PC-3 (cell line): ENCODE measurements at regions of chr7 and their contacts with region 1.

Region 1: DNA sequence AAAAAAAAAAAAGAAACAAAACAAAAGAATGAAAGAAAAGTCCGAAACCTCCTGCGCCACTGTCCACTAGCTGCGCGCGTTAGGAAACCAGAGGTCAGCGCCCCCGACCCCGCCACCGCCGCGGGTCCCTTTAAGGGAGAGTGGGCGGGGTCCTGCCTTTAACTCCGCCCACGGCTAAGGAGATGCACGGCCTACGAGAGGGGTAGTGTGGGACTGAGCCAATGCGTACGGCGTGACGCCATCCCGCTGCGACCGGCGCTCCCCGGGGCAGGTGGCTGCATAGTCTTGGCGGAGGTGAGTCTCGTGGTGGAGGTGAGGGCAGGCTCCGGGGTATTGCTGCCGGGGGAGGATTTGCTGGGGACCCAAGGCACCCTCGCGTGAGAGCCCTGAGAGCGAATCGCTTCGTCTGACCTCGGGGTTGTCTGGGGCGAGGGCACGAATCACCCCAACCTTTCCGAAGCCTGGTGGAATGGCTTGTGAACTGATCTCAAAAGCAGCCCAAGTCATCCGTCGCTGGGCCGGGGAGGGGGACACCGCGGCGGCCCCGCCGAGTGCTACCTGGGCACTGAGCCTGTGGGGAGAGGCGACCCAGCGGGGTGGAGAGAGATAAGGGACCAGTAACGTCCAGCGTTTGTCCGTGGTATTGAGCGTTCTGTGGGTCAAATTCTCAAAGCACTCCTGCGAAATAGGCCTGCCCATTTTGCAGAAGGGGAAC is at the start of gene MRPS17:
- DNase-seq: peak; percentile 90
- ATAC-seq: peak; percentile 100
- H3K4me3 ChIP-seq: peak within 1 kb of the TSS; percentile 97
- H3K27ac ChIP-seq: peak within 1 kb of the TSS; percentile 49
- H3K4me1 ChIP-seq: no peaks in the 10 kb centered on the region
- H3K27me3 ChIP-seq: no peaks in the 10 kb centered on the region
- CTCF ChIP-seq: no peak
- total RNA-seq, gene MRPS17: 16.9 and 20.1 TPM in 2 replicates

Region 2: GRCh38 chr7:55887821-55888247 is 64.0 kb before region 1 on chr7:
- CTCF ChIA-PET with region 1: no interaction called
- POLR2A ChIA-PET with region 1: no interaction called
- intact Hi-C with region 1: loop called (anchors 1 kb)
- DNase-seq: no peak
- ATAC-seq: no peak
- H3K4me3 ChIP-seq: peak overlapping the region; percentile 72
- H3K27ac ChIP-seq: no peak overlapping the region
- H3K4me1 ChIP-seq: no peaks in the 10 kb centered on the region
- H3K27me3 ChIP-seq: no peaks in the 10 kb centered on the region
- CTCF ChIP-seq: no peak

Region 3: GRCh38 chr7:55970978-55971377 is 19.2 kb after region 1 on chr7:
- CTCF ChIA-PET with region 1: no interaction called
- POLR2A ChIA-PET with region 1: no interaction called
- intact Hi-C with region 1: no loop called
- DNase-seq: no peak
- ATAC-seq: no peak
- H3K4me3 ChIP-seq: no peak overlapping the region
- H3K27ac ChIP-seq: no peak overlapping the region
- H3K4me1 ChIP-seq: peaks cover 4% of the 10 kb centered on the region; the same call in 1 of the 2 replicates
- H3K27me3 ChIP-seq: no peaks in the 10 kb centered on the region
- CTCF ChIP-seq: no peak

Region 4: GRCh38 chr7:56106108-56107073 is 154.6 kb after region 1 on chr7 and contains the start of gene CHCHD2:
- CTCF ChIA-PET with region 1: no interaction called
- POLR2A ChIA-PET with region 1: interaction called, 10 read pairs
- intact Hi-C with region 1: no loop called
- DNase-seq: peak; percentile 98
- ATAC-seq: peak; percentile 99
- H3K4me3 ChIP-seq: peak within 1 kb of the TSS; percentile 97
- H3K27ac ChIP-seq: peak within 1 kb of the TSS; percentile 70
- H3K4me1 ChIP-seq: peaks cover 6% of the 10 kb centered on the region; the same call in 1 of the 2 replicates
- H3K27me3 ChIP-seq: no peaks in the 10 kb centered on the region
- CTCF ChIP-seq: no peak
- total RNA-seq, gene CHCHD2: 499 and 578 TPM in 2 replicates